Activated CD4-positive, alpha-beta T cell treated with anti-CD3 and anti-CD28 coated beads, Interleukin-2, amount 10 ng/mL, durations not matched to agents 24 days and 14 days (primary cell): ENCODE measurements at regions of chr2 and their contacts with region 1.

Region 1: GRCh38 chr2:44668336-44668735 is 273.2 kb upstream of the SIX3 start:
- DNase-seq: no peak
- H3K4me3 Mint-ChIP-seq: no peak overlapping the region
- H3K27ac Mint-ChIP-seq: no peak overlapping the region
- H3K4me1 Mint-ChIP-seq: no peaks in the 10 kb centered on the region
- H3K27me3 Mint-ChIP-seq: no peaks in the 10 kb centered on the region

Region 2: DNA sequence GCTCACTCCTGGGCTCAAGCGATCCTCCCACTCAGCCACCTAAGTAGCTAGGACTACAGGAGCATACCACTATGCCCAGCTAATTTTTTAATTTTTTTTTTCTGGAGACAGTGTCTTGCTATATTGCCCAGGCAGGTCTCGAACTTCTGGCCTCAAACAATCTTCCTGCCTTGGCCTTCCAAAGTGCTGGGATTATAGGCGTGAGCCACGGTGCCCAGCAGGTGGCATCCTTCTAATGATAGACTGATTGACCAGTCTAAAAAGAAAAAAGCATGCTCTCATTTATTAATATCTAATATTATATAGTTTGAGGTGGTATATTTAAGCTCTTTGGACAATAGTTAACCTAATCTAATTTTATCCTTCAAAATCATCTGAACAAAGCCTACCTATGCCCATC is 108.0 kb before region 1 on chr2:
- intact Hi-C with region 1: loop called (anchors 10 kb)
- DNase-seq: no peak
- H3K4me3 Mint-ChIP-seq: no peak overlapping the region
- H3K27ac Mint-ChIP-seq: no peak overlapping the region
- H3K4me1 Mint-ChIP-seq: no peaks in the 10 kb centered on the region
- H3K27me3 Mint-ChIP-seq: no peaks in the 10 kb centered on the region

Region 3: DNA sequence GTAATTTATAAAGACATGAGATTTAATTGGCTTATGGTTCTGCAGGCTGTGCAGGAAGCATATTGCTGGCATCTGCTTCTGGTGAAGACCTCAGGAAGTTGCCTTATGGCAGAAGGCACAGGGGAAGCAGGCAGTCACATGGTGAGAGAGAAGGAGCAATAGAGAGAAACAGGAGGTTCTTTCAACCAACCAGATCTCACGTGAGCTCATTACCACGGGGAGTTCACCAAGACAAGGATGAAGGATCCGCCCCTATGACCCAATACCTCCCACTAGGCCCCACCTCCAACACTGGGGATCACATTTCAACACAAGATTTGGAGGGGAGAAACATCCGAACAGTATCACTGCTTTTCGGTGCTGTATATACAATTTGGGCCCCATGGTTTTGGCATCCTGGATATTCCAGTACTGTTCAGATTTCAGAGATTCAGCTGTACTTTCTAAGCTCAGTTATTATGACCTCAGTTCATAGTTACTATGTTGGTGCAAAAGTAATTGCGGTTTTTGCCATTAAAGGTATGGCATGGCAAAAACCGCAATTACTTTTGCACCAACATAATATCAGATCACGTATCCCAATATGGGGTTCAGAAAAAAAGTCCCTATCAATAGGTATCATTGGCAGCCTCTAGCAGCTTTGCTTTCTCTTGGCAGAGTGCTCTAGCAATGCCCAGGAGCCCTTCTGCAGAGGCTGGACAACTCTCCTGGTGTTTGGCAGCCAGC is 83.6 kb after region 1 on chr2:
- intact Hi-C with region 1: no loop called
- DNase-seq: no peak
- H3K4me3 Mint-ChIP-seq: no peak overlapping the region
- H3K27ac Mint-ChIP-seq: no peak overlapping the region
- H3K4me1 Mint-ChIP-seq: peaks cover 3% of the 10 kb centered on the region
- H3K27me3 Mint-ChIP-seq: no peaks in the 10 kb centered on the region